Uterus (tissue), 4 donors: ENCODE measurements at regions of chr1 and their contacts with region 1.

Region 1: GRCh38 chr1:983799-984473 is 2.0 kb upstream of the PERM1 start:
- DNase-seq: peak; percentile 31 to 58
- H3K4me3 ChIP-seq: no peak overlapping the region
- H3K27ac ChIP-seq: no peak overlapping the region
- H3K4me1 ChIP-seq: no peaks in the 10 kb centered on the region
- H3K27me3 ChIP-seq: no peaks in the 10 kb centered on the region
- CTCF ChIP-seq: peak; percentile 65 to 97 (median 82)
- POLR2A ChIP-seq: no peak

Region 2: GRCh38 chr1:890661-891060 is 93.3 kb before region 1 on chr1:
- intact Hi-C with region 1: no loop called
- DNase-seq: no peak
- H3K4me3 ChIP-seq: no peak overlapping the region
- H3K27ac ChIP-seq: no peak overlapping the region
- H3K4me1 ChIP-seq: no peaks in the 10 kb centered on the region
- H3K27me3 ChIP-seq: peaks cover 0 to 3% of the 10 kb centered on the region in 2 donors
- CTCF ChIP-seq: no peak
- POLR2A ChIP-seq: no peak

Region 3: GRCh38 chr1:1059494-1060280 is 75.8 kb after region 1 on chr1:
- intact Hi-C with region 1: loop called (anchors 10 kb)
- DNase-seq: peak; percentile 85 to 90
- H3K4me3 ChIP-seq: peak overlapping the region; percentile 2 to 38
- H3K27ac ChIP-seq: no peak overlapping the region
- H3K4me1 ChIP-seq: no peaks in the 10 kb centered on the region
- H3K27me3 ChIP-seq: peaks cover 9 to 13% of the 10 kb centered on the region in 2 donors
- CTCF ChIP-seq: no peak
- POLR2A ChIP-seq: peak in 1 of 2 donors; percentile 23